ENCODE measurements at regions of chr5 and their contacts with region 1.

Region 1: GRCh38 chr5:119470851-119471451 is 18.7 kb downstream of the HSD17B4 start:
- DNase-seq: no peak
- ATAC-seq: peak; percentile 78
- H3K4me3 ChIP-seq: no peak overlapping the region
- H3K27ac ChIP-seq: peak overlapping the region; percentile 81
- H3K4me1 ChIP-seq: peaks cover 15% of the 10 kb centered on the region
- H3K27me3 ChIP-seq: no peaks in the 10 kb centered on the region
- CTCF ChIP-seq: peak; percentile 62 to 79 (median 75); a peak in 5 of 6 replicates
- EP300 ChIP-seq: no peak
- POLR2A ChIP-seq: no peak
- RAD21 ChIP-seq: peak; percentile 93

Region 2: GRCh38 chr5:119079318-119079921 is 391.5 kb before region 1 on chr5:
- CTCF ChIA-PET with region 1: no interaction called
- POLR2A ChIA-PET with region 1: no interaction called
- RAD21 ChIA-PET with region 1: no interaction called
- SMC1A ChIA-PET with region 1: no interaction called
- in situ Hi-C with region 1: no loop called
- intact Hi-C with region 1: no loop called
- DNase-seq: no peak
- ATAC-seq: peak; percentile 55
- H3K4me3 ChIP-seq: peak overlapping the region; percentile 47; the same call in 1 of the 2 replicates
- H3K27ac ChIP-seq: peak overlapping the region; percentile 70
- H3K4me1 ChIP-seq: peaks cover 33% of the 10 kb centered on the region
- H3K27me3 ChIP-seq: no peaks in the 10 kb centered on the region
- CTCF ChIP-seq: no peak
- EP300 ChIP-seq: no peak
- POLR2A ChIP-seq: no peak
- RAD21 ChIP-seq: no peak

Region 3: GRCh38 chr5:119452373-119453039 is 18.4 kb before region 1 on chr5 and contains the start of gene HSD17B4:
- CTCF ChIA-PET with region 1: interaction called, 11 read pairs
- POLR2A ChIA-PET with region 1: interaction called, 4 read pairs
- RAD21 ChIA-PET with region 1: interaction called, 8 read pairs
- SMC1A ChIA-PET with region 1: interaction called, 4 read pairs
- in situ Hi-C with region 1: no loop called
- intact Hi-C with region 1: no loop called
- DNase-seq: peak; percentile 58
- ATAC-seq: peak; percentile 96
- H3K4me3 ChIP-seq: peak within 1 kb of the TSS; percentile 98
- H3K27ac ChIP-seq: peak within 1 kb of the TSS; percentile 45
- H3K4me1 ChIP-seq: no peaks in the 10 kb centered on the region
- H3K27me3 ChIP-seq: no peaks in the 10 kb centered on the region
- CTCF ChIP-seq: no peak
- EP300 ChIP-seq: no peak
- POLR2A ChIP-seq: peak; percentile 86
- RAD21 ChIP-seq: no peak
- polyA plus RNA-seq, gene HSD17B4: 38.6 to 62.4 TPM

Region 4: DNA sequence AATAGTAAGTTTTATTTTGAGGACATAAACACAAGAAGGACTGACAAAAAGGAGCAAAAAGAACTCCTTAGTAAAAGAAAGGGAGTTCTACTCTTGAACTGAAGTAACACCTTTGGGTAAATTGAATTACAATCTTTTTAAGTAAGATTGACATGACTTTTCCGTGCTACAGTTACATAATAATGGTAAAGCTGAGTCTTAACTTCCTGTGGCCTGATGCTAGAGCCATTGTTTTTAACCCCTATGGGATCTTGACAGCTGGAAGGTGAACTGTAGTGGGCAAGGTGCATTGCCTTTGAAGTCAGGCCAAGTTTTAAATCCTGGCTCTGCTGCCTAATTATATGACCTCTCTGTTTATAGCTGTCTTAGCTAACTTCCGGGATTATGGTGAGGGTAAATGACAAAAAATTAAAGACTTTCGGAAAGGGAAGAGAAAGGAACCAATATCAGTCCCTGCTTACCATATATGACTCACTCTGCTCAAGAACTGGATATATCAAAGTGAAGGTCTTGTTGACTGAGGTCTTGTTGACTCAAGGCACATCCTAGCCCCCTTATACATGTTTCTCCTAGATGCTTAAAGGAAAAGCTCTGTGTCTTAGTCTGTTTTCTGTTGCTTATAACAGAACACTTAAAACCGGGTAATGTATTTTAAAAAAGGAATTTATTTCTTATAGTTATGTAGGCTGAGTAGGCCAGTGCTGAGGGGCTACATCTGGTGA is 11.9 kb before region 1 on chr5:
- CTCF ChIA-PET with region 1: interaction called, 15 read pairs
- POLR2A ChIA-PET with region 1: no interaction called
- RAD21 ChIA-PET with region 1: interaction called, 4 read pairs
- SMC1A ChIA-PET with region 1: interaction called, 9 read pairs
- in situ Hi-C with region 1: no loop called
- intact Hi-C with region 1: no loop called
- DNase-seq: no peak
- ATAC-seq: peak; percentile 31; the same call in 1 of the 3 replicates
- H3K4me3 ChIP-seq: no peak overlapping the region
- H3K27ac ChIP-seq: no peak overlapping the region
- H3K4me1 ChIP-seq: no peaks in the 10 kb centered on the region
- H3K27me3 ChIP-seq: no peaks in the 10 kb centered on the region
- CTCF ChIP-seq: no peak
- EP300 ChIP-seq: no peak
- POLR2A ChIP-seq: no peak
- RAD21 ChIP-seq: no peak

Region 5: DNA sequence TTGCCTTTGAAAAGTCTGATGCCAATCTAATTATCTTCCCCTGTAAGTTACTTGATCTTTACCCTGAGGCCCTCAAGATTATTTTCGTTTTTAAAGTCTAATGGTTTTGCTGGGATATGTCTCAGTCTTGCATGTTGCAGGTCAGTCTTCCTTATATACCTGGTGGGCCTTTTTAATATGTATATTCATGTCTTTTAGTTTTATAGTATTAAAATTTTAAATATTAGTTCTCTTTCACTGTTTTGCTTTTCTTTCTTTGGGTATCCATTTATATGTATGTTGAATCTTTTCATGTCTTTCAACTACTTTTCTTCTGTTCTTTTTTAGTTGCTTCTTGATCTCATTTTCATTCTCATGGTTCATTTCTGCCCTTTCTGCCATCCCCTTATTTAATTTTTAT is 50.3 kb after region 1 on chr5:
- CTCF ChIA-PET with region 1: no interaction called
- POLR2A ChIA-PET with region 1: no interaction called
- RAD21 ChIA-PET with region 1: no interaction called
- SMC1A ChIA-PET with region 1: no interaction called
- in situ Hi-C with region 1: no loop called
- intact Hi-C with region 1: no loop called
- DNase-seq: no peak
- ATAC-seq: no peak
- H3K4me3 ChIP-seq: no peak overlapping the region
- H3K27ac ChIP-seq: no peak overlapping the region
- H3K4me1 ChIP-seq: no peaks in the 10 kb centered on the region
- H3K27me3 ChIP-seq: no peaks in the 10 kb centered on the region
- CTCF ChIP-seq: no peak
- EP300 ChIP-seq: no peak
- POLR2A ChIP-seq: no peak
- RAD21 ChIP-seq: no peak

Region 6: GRCh38 chr5:119743927-119744326 is 273.0 kb after region 1 on chr5:
- CTCF ChIA-PET with region 1: interaction called, 6 read pairs
- POLR2A ChIA-PET with region 1: no interaction called
- RAD21 ChIA-PET with region 1: interaction called, 11 read pairs
- SMC1A ChIA-PET with region 1: interaction called, 3 read pairs
- in situ Hi-C with region 1: loop called (anchors 5 kb)
- intact Hi-C with region 1: loop called (anchors 1 kb)
- DNase-seq: peak; percentile 48
- ATAC-seq: peak; percentile 93
- H3K4me3 ChIP-seq: no peak overlapping the region
- H3K27ac ChIP-seq: no peak overlapping the region
- H3K4me1 ChIP-seq: no peaks in the 10 kb centered on the region
- H3K27me3 ChIP-seq: no peaks in the 10 kb centered on the region; a peak in 1 of 4 replicates
- CTCF ChIP-seq: peak; percentile 62 to 73 (median 73); a peak in 5 of 6 replicates
- EP300 ChIP-seq: no peak
- POLR2A ChIP-seq: no peak
- RAD21 ChIP-seq: peak; percentile 76

Region 7: GRCh38 chr5:119897537-119898370 is 426.8 kb after region 1 on chr5:
- CTCF ChIA-PET with region 1: no interaction called
- POLR2A ChIA-PET with region 1: no interaction called
- RAD21 ChIA-PET with region 1: no interaction called
- SMC1A ChIA-PET with region 1: no interaction called
- in situ Hi-C with region 1: no loop called
- intact Hi-C with region 1: loop called (anchors 10 kb)
- DNase-seq: no peak
- ATAC-seq: no peak
- H3K4me3 ChIP-seq: no peak overlapping the region
- H3K27ac ChIP-seq: no peak overlapping the region
- H3K4me1 ChIP-seq: no peaks in the 10 kb centered on the region
- H3K27me3 ChIP-seq: no peaks in the 10 kb centered on the region
- CTCF ChIP-seq: no peak
- EP300 ChIP-seq: no peak
- POLR2A ChIP-seq: no peak
- RAD21 ChIP-seq: no peak

Region 8: DNA sequence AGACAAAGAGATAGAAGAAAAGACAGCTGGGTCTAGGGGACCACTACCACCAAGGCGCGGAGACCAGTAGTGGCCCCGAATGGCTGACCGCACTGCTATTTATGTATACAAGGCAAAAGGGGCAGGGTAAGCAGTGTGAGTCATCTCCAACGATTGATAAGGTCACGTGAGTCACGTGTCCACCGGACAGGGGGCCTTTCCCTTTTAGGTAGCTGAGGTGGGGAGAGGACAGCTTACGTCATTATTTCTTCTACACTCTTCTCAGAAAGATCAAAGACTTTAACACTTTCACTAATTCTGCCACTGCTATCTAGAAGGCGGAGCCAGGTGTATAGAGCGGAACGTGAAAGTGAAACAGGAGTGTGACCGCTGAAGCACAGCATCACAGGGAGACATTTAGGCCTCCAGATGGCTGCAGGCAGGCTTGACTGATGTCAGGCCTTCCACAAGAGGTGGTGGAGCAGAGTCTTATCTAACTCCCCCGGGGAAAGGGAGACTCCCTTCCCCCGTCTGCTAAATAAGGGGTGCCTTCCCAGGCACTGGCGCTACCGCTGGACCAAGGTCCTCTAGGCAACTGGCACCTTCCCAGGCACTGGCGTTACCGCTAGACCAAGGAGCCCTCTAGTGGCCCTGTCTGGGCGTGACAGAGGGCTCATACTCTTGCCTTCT is 987.0 kb after region 1 on chr5:
- CTCF ChIA-PET with region 1: interaction called, 7 read pairs
- POLR2A ChIA-PET with region 1: no interaction called
- RAD21 ChIA-PET with region 1: no interaction called
- SMC1A ChIA-PET with region 1: no interaction called
- in situ Hi-C with region 1: loop called (anchors 10 kb)
- intact Hi-C with region 1: loop called (anchors 1 kb)
- DNase-seq: peak; percentile 85
- ATAC-seq: peak; percentile 95
- H3K4me3 ChIP-seq: no peak overlapping the region
- H3K27ac ChIP-seq: peak overlapping the region; percentile 53; the same call in 1 of the 2 replicates
- H3K4me1 ChIP-seq: no peaks in the 10 kb centered on the region
- H3K27me3 ChIP-seq: no peaks in the 10 kb centered on the region
- CTCF ChIP-seq: peak; percentile 38 to 75 (median 61)
- EP300 ChIP-seq: peak; percentile 15 to 52; a peak in 1 of 4 replicates
- POLR2A ChIP-seq: no peak
- RAD21 ChIP-seq: peak; percentile 34; the same call in 1 of the 2 replicates